ENCODE measurements at regions of chr5 and their contacts with region 1.

Region 1: DNA sequence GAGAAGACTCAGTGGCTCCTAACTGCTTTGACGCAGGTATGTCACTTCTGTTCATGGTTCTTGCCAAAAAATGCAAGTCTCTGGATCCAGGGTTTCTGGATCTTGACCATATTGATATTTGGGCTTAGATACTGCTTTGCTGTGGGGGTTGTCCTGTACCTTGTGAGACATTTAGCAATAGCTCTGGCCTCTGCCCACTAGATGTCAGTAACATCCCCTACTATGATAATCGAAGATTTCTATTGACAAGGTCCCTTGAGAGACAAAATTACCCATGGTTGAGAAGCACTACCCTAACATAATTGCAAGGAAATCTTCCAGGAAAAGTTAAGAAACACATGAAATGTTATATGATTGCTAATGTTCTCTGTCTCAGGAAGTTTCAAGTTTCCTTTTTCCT is 285.4 kb downstream of the TMEM232 start:
- DNase-seq: peak; percentile 35
- H3K4me3 Mint-ChIP-seq: no peak overlapping the region
- H3K27ac Mint-ChIP-seq: no peak overlapping the region
- H3K4me1 Mint-ChIP-seq: no peaks in the 10 kb centered on the region
- H3K27me3 Mint-ChIP-seq: peaks cover 7% of the 10 kb centered on the region
- CTCF ChIP-seq: peak; percentile 48

Region 2: GRCh38 chr5:110590187-110590586 is 149.2 kb after region 1 on chr5:
- CTCF ChIA-PET with region 1: no interaction called
- intact Hi-C with region 1: loop called (anchors 1 kb)
- DNase-seq: no peak
- H3K4me3 Mint-ChIP-seq: no peak overlapping the region
- H3K27ac Mint-ChIP-seq: no peak overlapping the region
- H3K4me1 Mint-ChIP-seq: no peaks in the 10 kb centered on the region
- H3K27me3 Mint-ChIP-seq: no peaks in the 10 kb centered on the region
- CTCF ChIP-seq: peak; percentile 71

Region 3: GRCh38 chr5:110625376-110625999 is 184.5 kb after region 1 on chr5:
- CTCF ChIA-PET with region 1: interaction called, 9 read pairs
- intact Hi-C with region 1: loop called (anchors 1 kb)
- DNase-seq: no peak
- H3K4me3 Mint-ChIP-seq: no peak overlapping the region
- H3K27ac Mint-ChIP-seq: no peak overlapping the region
- H3K4me1 Mint-ChIP-seq: no peaks in the 10 kb centered on the region
- H3K27me3 Mint-ChIP-seq: no peaks in the 10 kb centered on the region
- CTCF ChIP-seq: no peak

Region 4: GRCh38 chr5:110651512-110651911 is 210.5 kb after region 1 on chr5:
- CTCF ChIA-PET with region 1: no interaction called
- intact Hi-C with region 1: no loop called
- DNase-seq: no peak
- H3K4me3 Mint-ChIP-seq: no peak overlapping the region
- H3K27ac Mint-ChIP-seq: no peak overlapping the region
- H3K4me1 Mint-ChIP-seq: no peaks in the 10 kb centered on the region
- H3K27me3 Mint-ChIP-seq: no peaks in the 10 kb centered on the region
- CTCF ChIP-seq: no peak

Measured in Calu3 (cell line).